Left cardiac atrium (tissue), 4 donors: ENCODE measurements at regions of chr3 and their contacts with region 1.

Region 1: GRCh38 chr3:196537319-196537984 is 22.3 kb upstream of the SMCO1 start:
- DNase-seq: peak; percentile 35
- ATAC-seq: no peak

Region 2: DNA sequence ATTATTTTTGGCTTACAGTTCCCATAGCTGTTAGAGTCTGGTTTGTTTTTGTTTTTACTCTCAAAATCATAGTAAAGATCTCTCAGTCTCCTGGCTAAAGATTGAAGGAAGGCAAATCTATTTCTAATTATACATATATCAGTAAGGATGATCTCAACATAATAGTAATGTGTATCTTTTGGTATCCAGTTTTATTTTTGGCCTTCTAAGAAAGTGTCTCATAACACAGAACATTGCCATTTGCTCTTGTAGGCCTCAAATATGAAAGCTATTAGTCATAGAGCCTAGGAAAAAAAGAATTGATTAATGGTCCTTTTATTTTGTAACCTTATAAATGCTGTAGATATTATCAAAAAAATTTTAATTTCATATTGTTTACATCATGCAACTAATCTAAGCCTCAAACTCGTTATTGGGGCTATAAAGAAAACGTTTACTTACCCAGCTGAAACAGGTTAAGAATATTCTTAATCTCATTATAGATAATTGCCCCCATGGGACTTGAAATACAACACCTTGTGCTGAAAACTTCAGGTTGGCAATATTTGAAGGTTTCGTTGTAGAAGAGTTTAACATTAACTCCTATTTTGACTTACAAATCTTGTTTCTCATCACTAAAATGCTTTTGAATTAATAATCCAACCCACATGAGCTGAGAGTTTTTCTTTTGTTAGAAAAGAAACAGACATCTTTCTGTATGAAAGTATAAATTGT is 47.7 kb after region 1 on chr3:
- intact Hi-C with region 1: no loop called
- DNase-seq: no peak
- ATAC-seq: no peak

Region 3: GRCh38 chr3:196684548-196685407 is 147.3 kb after region 1 on chr3:
- intact Hi-C with region 1: loop called in 1 of 2 experiments (anchors 2 kb)
- DNase-seq: peak; percentile 50
- ATAC-seq: peak; percentile 75 to 79

Region 4: DNA sequence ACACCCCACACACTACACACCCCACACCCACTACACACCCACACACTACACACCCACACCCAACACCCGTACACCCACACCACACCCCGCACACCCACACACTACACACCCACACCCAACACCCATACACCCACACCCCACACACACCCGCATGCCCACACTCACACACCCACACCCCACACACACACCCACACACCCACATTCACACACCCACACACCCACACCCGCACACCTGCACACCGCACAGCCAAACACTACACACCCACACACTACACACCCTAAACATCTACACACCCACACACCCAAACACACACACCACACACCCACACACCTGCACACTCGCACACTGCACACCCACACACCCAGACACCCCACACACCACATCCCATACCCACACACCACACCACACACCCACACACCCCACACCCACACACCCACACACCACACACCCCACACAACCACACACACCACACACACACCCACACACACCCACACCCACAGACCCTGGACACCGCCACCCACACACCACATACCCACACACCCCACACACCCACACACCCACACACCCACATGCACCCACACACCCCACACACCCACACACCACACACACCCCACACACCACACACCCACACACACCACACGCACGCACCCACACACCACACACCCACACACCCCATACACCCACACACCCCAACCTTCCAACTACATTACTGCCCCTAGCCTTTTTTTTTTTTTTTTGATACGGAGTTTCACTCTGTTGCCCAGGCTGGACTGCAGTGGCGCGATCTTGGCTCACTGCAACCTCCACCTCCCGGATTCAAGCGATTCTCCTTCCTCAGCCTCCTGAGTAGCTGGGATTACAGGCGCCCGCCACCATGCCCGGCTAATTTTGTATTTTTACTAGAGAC is 157.7 kb after region 1 on chr3:
- intact Hi-C with region 1: no loop called
- DNase-seq: no peak
- ATAC-seq: peak in 1 of 2 donors; percentile 22